Breast epithelium (tissue), 4 donors: ENCODE measurements at regions of chr9 and their contacts with region 1.

Region 1: GRCh38 chr9:4679268-4680172 is at the start of gene CDC37L1:
- DNase-seq: peak; percentile 96 to 98
- H3K4me3 ChIP-seq: peak within 1 kb of the TSS; percentile 77 to 89 (median 88)
- H3K27ac ChIP-seq: peak within 1 kb of the TSS; percentile 97
- H3K4me1 ChIP-seq: no peaks in the 10 kb centered on the region
- H3K27me3 ChIP-seq: no peaks in the 10 kb centered on the region
- CTCF ChIP-seq: peak; percentile 88 to 93 (median 89)
- POLR2A ChIP-seq: peak; percentile 93
- total RNA-seq, gene CDC37L1: 36.4 to 53.4 (median 42.7) TPM

Region 2: DNA sequence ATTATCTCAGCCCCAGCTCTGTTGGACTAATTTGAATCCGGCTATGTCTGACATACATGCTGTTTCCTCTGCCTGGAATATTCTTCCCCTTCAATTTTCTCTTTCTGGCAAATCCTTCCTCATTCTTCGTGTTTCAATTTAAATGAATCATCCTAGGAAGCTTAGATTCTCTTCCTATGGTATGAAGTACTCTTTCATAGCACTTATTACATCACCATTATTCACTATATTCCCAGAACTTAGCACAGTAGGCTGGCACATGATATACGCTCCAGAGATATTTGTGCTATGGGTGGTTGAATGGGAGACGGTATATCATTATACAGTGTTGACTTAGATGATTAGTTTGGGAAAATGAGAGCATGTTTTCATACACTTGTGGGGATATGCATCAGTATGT is 214.6 kb after region 1 on chr9:
- intact Hi-C with region 1: loop called (anchors 5 kb)
- DNase-seq: no peak
- H3K4me3 ChIP-seq: no peak overlapping the region
- H3K27ac ChIP-seq: no peak overlapping the region
- H3K4me1 ChIP-seq: no peaks in the 10 kb centered on the region
- H3K27me3 ChIP-seq: no peaks in the 10 kb centered on the region
- CTCF ChIP-seq: no peak
- POLR2A ChIP-seq: no peak